HEK293 (cell line): ENCODE measurements at regions of chr18 and their contacts with region 1.

Region 1: DNA sequence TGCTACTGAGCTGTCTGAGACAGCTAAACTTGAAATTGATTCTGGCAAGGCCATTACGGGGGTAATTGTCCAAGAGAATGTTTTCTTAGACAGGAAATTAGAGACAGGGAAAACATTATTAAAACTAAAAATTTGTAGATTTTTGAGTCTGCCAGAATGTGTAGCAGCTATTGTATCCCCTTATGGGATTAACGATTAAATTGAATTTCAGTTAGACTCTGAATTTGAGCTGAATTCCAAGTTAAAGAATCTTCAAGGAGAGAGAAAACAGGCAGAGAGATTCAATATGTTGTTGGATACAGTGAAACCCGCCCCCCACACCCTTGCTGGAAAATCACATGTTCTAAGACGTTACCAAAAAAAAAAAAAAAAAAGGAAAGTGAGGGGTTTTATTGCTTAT is 32.7 kb upstream of the CCDC68 start:
- H3K4me3 ChIP-seq: no peak overlapping the region
- H3K27ac ChIP-seq: no peak overlapping the region
- H3K4me1 ChIP-seq: no peaks in the 10 kb centered on the region
- CTCF ChIP-seq: no peak

Region 2: DNA sequence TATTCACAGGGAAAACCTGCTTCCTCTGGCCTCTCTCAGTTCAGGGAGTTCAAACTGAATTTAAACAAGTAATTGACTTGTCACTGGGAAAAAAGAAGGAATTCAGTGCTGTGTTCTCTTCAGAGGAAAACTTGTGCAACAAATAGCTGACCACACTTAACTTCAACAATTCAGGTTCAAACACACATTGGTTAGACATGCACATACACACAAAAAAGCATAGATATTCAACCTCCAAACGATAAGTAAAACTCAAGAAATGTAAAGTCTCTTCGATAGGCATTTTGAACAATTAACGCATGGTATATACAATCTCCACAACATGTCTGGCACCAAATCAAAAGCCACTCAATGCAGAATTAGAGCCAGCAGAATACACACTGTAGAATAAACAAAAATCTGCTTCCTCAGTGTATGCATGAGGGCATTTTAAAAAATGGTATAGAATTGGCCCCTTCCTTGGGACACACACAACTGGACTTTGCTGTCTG is 327.0 kb after region 1 on chr18:
- CTCF ChIA-PET with region 1: no interaction called
- POLR2A ChIA-PET with region 1: interaction called, 10 read pairs
- H3K4me3 ChIP-seq: no peak overlapping the region
- H3K27ac ChIP-seq: peak overlapping the region; percentile 8; the same call in 1 of the 2 replicates
- H3K4me1 ChIP-seq: peaks cover 69% of the 10 kb centered on the region
- CTCF ChIP-seq: no peak